ENCODE measurements at regions of chr6 and their contacts with region 1.

Region 1: DNA sequence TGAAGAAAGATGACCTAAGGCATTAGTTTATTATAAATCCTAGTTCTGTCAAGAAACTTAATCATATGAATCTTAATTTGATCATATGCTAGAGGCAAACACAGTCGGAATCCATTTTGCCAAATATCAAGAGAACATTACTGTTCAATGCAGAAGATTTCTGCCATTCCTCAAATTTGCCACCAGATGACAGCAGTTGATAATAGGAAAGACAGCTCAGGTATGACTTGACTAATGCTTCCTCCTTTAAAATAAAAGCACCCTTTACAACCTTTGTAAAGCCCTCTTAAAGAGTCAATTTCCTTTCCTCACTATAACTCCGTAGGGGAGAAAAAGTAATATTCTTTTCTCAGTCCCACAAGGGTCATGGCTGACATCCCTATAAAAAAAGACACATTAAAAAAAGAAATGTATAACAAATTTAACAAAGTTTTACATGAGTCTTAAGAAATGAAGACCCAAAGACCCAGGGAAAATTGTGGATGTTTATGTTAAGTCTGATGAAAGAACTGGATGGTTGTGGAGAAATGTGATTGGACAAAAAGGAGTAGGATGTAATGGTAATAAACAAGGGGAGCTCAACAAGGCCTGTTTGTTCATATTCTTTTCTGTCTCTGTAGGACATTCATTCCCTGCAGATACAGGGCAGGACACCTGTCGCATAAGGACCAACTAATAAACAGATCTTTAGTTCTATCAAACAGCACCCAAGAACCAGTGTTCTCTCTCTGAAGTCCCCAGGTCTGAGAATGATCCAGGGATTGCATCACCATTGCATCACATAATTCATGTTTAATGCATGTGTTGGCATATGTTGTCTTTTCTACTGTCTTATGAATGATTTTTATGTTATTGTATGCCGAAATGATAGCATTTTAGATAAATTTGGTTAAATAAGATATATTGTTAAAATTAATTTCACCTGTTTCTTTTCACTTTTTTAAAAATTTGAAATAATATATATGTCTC is 23.0 kb upstream of the IL17A start:
- DNase-seq: no peak
- ATAC-seq: no peak

Region 2: GRCh38 chr6:52233975-52234823 is 71.0 kb after region 1 on chr6:
- intact Hi-C with region 1: loop called in 1 of 2 experiments (anchors 10 kb)
- DNase-seq: no peak
- ATAC-seq: no peak

Region 3: GRCh38 chr6:52454556-52454955 is 291.3 kb after region 1 on chr6:
- intact Hi-C with region 1: no loop called
- DNase-seq: no peak
- ATAC-seq: no peak

Measured in left cardiac atrium (tissue), 4 donors.